ENCODE measurements at regions of chr22 and their contacts with region 1.

Region 1: GRCh38 chr22:25081409-25081824 is 118.2 kb upstream of the CRYBB3 start:
- DNase-seq: no peak
- ATAC-seq: peak; percentile 51
- H3K4me3 ChIP-seq: no peak overlapping the region
- H3K27ac ChIP-seq: no peak overlapping the region
- H3K4me1 ChIP-seq: peaks cover 34% of the 10 kb centered on the region
- H3K27me3 ChIP-seq: no peaks in the 10 kb centered on the region
- CTCF ChIP-seq: peak; percentile 60 to 77 (median 69)
- EP300 ChIP-seq: no peak
- POLR2A ChIP-seq: no peak
- RAD21 ChIP-seq: peak; percentile 44

Region 2: DNA sequence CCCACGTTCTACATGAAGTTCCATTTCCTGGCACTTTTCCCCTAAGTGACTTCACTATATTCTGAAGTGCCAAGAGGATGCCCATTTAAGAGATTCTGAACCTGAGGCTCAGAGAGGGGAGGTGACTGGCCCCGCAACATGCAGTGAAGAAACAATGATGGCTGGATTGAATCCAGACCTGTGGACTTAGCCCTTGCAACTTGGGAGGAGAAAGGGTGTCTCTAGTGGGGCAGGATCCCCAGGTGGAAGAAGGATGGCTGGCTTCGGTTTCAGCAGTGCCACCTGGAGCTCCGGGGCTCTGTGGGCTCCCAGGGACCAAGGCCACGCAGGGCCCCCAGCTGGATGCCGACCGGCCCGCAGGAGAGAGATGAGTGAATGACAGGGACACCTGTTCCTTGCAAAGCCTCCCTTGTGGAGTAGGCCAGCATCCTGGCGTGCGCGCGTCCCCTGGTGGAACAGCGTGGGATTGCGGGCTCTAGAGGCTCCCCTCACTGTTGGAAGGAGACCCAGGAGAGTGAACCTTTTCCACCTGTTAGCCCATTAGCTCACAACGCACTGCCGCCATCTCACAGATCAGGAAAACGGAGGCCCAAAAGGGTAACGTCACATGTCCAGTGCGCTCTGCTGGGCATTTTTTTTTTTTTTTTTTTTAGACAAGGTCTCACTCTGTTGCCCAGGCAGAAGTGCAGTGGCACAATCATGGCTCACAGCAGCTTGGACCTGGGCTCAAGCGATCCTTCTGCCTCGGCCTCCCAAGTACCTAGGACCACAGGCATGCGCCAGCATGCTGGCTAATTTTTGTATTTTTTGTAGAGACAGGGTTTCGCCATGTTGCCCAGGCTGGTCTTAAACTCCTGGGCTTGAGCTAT is 24.2 kb before region 1 on chr22:
- CTCF ChIA-PET with region 1: interaction called, 18 read pairs
- POLR2A ChIA-PET with region 1: no interaction called
- RAD21 ChIA-PET with region 1: interaction called, 5 read pairs
- SMC1A ChIA-PET with region 1: interaction called, 17 read pairs
- in situ Hi-C with region 1: no loop called
- intact Hi-C with region 1: no loop called
- DNase-seq: no peak
- ATAC-seq: peak; percentile 94
- H3K4me3 ChIP-seq: no peak overlapping the region
- H3K27ac ChIP-seq: no peak overlapping the region
- H3K4me1 ChIP-seq: no peaks in the 10 kb centered on the region
- H3K27me3 ChIP-seq: no peaks in the 10 kb centered on the region; a peak in 1 of 4 replicates
- CTCF ChIP-seq: peak; percentile 91 to 99 (median 95)
- EP300 ChIP-seq: no peak
- POLR2A ChIP-seq: no peak
- RAD21 ChIP-seq: peak; percentile 68

Region 3: DNA sequence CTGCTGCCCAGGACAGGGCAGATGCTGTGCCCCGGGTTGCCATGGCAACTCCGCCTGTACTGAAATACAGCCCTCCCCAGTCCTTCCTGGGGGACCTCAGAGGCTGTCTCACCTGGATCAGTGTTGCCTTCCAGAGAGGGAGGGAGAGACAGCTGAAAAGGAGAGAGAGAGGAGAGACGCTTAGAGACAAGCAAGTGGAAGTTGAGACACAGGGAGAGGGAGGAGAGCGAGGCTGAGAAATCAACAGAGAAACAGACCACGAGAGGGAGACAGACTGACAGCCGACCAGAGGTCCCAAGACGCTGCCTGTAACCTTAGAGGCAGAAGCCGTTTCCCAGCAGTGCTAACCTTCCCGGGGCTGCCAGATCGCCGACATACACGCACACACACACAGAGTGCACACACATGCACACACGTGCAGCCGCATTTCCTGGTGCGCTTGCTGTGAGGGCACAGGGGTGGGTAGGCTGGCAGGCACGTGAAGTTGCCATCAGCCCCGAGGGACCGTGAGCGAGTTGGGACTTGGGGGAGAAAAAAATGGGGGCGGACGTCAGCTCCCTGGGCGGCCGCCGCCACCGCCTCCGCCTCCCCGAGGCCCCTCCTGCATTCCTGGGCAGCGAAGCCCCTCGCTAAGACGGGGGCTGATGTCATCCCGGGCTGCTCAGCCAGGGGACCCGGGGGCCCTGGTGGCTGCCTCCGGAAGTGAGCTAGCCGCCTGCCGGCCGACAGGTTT is 29.6 kb after region 1 on chr22:
- CTCF ChIA-PET with region 1: interaction called, 12 read pairs
- POLR2A ChIA-PET with region 1: no interaction called
- RAD21 ChIA-PET with region 1: interaction called, 8 read pairs
- SMC1A ChIA-PET with region 1: interaction called, 15 read pairs
- in situ Hi-C with region 1: no loop called
- intact Hi-C with region 1: loop called (anchors 1 kb)
- DNase-seq: peak; percentile 26
- ATAC-seq: peak; percentile 87
- H3K4me3 ChIP-seq: no peak overlapping the region
- H3K27ac ChIP-seq: no peak overlapping the region
- H3K4me1 ChIP-seq: no peaks in the 10 kb centered on the region
- H3K27me3 ChIP-seq: peaks cover 0 to 13% of the 10 kb centered on the region in 2 experiments; a peak in 3 of 4 replicates
- CTCF ChIP-seq: peak; percentile 40 to 64 (median 51)
- EP300 ChIP-seq: no peak
- POLR2A ChIP-seq: no peak
- RAD21 ChIP-seq: no peak

Region 4: DNA sequence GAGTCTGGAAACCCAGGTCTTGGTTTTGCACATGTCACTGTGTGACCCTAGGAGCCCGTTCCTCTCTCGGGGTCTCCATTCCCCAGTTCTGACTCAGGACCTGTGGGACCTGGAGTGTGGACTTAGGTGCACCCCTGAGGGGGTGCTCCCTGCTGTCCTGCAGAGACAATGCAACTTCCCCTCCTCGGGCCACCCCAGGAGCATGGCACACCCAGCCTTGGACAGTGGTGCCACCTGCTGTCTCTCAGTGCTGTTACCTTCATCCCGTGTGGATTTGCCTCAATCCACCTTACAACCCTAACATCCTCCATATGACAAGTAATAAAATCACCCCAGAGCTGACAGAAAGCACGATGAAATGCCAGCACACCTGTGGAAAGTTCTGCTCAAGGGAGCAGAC is 90.7 kb after region 1 on chr22:
- CTCF ChIA-PET with region 1: interaction called, 160 read pairs
- POLR2A ChIA-PET with region 1: no interaction called
- RAD21 ChIA-PET with region 1: interaction called, 35 read pairs
- SMC1A ChIA-PET with region 1: interaction called, 32 read pairs
- in situ Hi-C with region 1: loop called (anchors 5 kb)
- intact Hi-C with region 1: loop called (anchors 1 kb)
- DNase-seq: no peak
- ATAC-seq: peak; percentile 91
- H3K4me3 ChIP-seq: no peak overlapping the region
- H3K27ac ChIP-seq: no peak overlapping the region
- H3K4me1 ChIP-seq: no peaks in the 10 kb centered on the region
- H3K27me3 ChIP-seq: no peaks in the 10 kb centered on the region; a peak in 1 of 4 replicates
- CTCF ChIP-seq: peak; percentile 47 to 76 (median 51)
- EP300 ChIP-seq: no peak
- POLR2A ChIP-seq: no peak
- RAD21 ChIP-seq: peak; percentile 32; the same call in 1 of the 2 replicates

Region 5: GRCh38 chr22:25334162-25334490 is 252.7 kb after region 1 on chr22:
- CTCF ChIA-PET with region 1: interaction called, 23 read pairs
- POLR2A ChIA-PET with region 1: no interaction called
- RAD21 ChIA-PET with region 1: interaction called, 7 read pairs
- SMC1A ChIA-PET with region 1: interaction called, 5 read pairs
- in situ Hi-C with region 1: loop called (anchors 5 kb)
- intact Hi-C with region 1: loop called (anchors 2 kb)
- DNase-seq: peak; percentile 0
- ATAC-seq: peak; percentile 97
- H3K4me3 ChIP-seq: no peak overlapping the region
- H3K27ac ChIP-seq: no peak overlapping the region
- H3K4me1 ChIP-seq: no peaks in the 10 kb centered on the region
- H3K27me3 ChIP-seq: no peaks in the 10 kb centered on the region
- CTCF ChIP-seq: peak; percentile 53 to 80 (median 64)
- EP300 ChIP-seq: no peak
- POLR2A ChIP-seq: no peak
- RAD21 ChIP-seq: peak; percentile 34; the same call in 1 of the 2 replicates

Region 6: GRCh38 chr22:25525376-25525775 is 444.0 kb after region 1 on chr22:
- CTCF ChIA-PET with region 1: no interaction called
- POLR2A ChIA-PET with region 1: no interaction called
- RAD21 ChIA-PET with region 1: no interaction called
- SMC1A ChIA-PET with region 1: no interaction called
- in situ Hi-C with region 1: no loop called
- intact Hi-C with region 1: no loop called
- DNase-seq: no peak
- ATAC-seq: no peak
- H3K4me3 ChIP-seq: no peak overlapping the region
- H3K27ac ChIP-seq: no peak overlapping the region
- H3K4me1 ChIP-seq: no peaks in the 10 kb centered on the region
- H3K27me3 ChIP-seq: no peaks in the 10 kb centered on the region
- CTCF ChIP-seq: no peak
- EP300 ChIP-seq: no peak
- POLR2A ChIP-seq: no peak
- RAD21 ChIP-seq: no peak

Measured in GM12878 (cell line).